Calu3 (cell line): ENCODE measurements at regions of chr6 and their contacts with region 1.

Region 1: DNA sequence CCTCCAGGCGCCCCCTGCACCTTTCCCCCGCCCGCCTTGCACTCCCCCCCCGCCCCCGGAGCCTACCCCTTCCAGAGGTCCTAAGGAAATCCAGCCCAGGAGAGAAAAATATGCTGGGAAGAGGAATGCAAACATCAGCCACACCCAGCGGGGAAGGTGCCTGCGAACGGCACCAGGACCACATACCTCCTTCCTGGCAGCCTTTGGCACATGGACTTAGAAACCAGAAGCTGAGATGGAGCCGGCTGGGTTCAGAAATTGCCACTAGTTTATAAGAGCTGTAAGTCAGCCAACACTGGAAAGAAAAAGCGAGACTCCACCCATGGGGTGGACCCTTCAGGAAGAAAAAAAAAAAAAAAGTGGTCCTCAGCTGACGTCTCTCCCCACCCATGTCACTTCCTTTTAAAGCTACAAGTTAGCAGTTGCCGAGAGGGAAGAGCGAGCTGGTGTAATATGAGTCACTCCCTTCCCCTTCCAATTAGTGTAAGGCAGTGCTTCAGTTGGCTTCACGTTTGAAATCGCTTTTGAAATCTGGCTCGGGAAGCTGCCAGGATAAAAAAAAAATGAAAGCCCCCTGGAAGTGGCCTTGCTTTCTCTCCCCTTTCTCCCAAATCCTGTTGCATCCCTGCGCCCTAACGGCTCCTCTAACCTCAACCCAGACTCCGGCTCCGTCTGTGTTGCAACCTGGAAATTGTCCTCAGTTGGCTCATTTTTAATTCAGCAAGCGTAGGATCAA is at the start of gene AGPAT4:
- DNase-seq: peak; percentile 75
- H3K4me3 Mint-ChIP-seq: peak within 1 kb of the TSS; percentile 75
- H3K27ac Mint-ChIP-seq: peak within 1 kb of the TSS; percentile 96
- H3K4me1 Mint-ChIP-seq: peaks cover 12% of the 10 kb centered on the region
- H3K27me3 Mint-ChIP-seq: no peaks in the 10 kb centered on the region
- CTCF ChIP-seq: no peak
- total RNA-seq, gene AGPAT4: 8.7 and 11.3 TPM in 2 replicates

Region 2: GRCh38 chr6:160714731-160715316 is 559.1 kb before region 1 on chr6:
- CTCF ChIA-PET with region 1: no interaction called
- intact Hi-C with region 1: no loop called
- DNase-seq: no peak
- H3K4me3 Mint-ChIP-seq: no peak overlapping the region
- H3K27ac Mint-ChIP-seq: no peak overlapping the region
- H3K4me1 Mint-ChIP-seq: no peaks in the 10 kb centered on the region
- H3K27me3 Mint-ChIP-seq: no peaks in the 10 kb centered on the region
- CTCF ChIP-seq: no peak

Region 3: DNA sequence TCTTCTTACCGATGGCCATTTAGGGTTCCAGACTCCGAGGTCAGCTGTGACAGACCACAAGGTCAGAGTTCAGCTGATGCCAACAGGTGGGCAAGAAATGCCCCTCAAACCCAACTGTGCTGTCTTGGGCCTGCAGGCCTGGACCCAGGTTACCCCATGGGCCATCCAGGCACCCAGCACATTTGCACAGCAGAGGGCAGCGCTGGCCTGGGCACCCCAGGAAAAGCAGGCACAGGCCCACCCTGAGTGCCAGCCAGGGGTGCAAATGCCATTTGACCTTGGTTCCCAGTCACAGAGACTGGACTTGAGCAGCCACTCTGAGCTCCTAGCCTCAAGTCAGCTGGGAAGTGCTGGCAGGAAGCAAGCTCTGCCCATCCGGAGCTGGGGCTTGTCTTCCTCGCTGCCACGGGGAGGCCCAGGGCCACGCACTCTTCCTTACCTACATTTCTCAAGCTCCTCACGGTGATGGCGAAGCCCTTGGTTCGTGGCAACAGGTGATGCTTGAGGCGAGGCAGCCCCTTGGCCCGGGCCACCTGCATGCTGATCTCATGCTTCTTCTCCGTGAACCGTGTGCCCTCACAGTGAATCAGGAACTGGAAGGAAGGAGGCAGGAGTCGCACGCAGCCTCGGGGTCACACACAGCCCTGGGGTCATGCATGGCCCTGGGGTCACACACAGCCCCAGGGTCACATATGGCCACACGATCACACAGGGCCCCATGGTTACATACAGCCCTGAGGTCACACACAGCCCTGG is 120.8 kb before region 1 on chr6:
- CTCF ChIA-PET with region 1: no interaction called
- intact Hi-C with region 1: loop called (anchors 10 kb)
- DNase-seq: peak; percentile 33
- H3K4me3 Mint-ChIP-seq: no peak overlapping the region
- H3K27ac Mint-ChIP-seq: no peak overlapping the region
- H3K4me1 Mint-ChIP-seq: no peaks in the 10 kb centered on the region
- H3K27me3 Mint-ChIP-seq: no peaks in the 10 kb centered on the region
- CTCF ChIP-seq: peak; percentile 49

Region 4: DNA sequence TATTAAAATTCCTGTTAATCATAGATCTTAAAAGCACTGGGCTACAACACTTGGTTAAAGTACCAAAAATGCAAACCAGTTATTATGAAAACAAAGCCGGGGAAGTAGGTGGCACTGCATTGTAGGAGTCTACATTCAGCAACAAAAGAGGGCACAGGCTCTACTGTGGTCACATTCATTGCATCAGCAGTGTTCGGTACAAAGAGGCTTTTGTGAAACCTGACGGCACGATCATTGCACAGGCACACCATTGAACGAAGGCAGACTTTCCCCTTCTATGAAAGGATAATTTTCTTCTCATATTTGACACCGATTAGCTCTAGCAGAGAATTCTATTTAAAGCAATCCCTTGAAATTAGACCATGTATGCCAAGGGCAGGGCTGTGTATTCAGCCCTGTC is 44.5 kb after region 1 on chr6:
- CTCF ChIA-PET with region 1: interaction called, 6 read pairs
- intact Hi-C with region 1: loop called (anchors 5 kb)
- DNase-seq: peak; percentile 54
- H3K4me3 Mint-ChIP-seq: no peak overlapping the region
- H3K27ac Mint-ChIP-seq: peak overlapping the region; percentile 74
- H3K4me1 Mint-ChIP-seq: peaks cover 29% of the 10 kb centered on the region
- H3K27me3 Mint-ChIP-seq: no peaks in the 10 kb centered on the region
- CTCF ChIP-seq: no peak

Region 5: DNA sequence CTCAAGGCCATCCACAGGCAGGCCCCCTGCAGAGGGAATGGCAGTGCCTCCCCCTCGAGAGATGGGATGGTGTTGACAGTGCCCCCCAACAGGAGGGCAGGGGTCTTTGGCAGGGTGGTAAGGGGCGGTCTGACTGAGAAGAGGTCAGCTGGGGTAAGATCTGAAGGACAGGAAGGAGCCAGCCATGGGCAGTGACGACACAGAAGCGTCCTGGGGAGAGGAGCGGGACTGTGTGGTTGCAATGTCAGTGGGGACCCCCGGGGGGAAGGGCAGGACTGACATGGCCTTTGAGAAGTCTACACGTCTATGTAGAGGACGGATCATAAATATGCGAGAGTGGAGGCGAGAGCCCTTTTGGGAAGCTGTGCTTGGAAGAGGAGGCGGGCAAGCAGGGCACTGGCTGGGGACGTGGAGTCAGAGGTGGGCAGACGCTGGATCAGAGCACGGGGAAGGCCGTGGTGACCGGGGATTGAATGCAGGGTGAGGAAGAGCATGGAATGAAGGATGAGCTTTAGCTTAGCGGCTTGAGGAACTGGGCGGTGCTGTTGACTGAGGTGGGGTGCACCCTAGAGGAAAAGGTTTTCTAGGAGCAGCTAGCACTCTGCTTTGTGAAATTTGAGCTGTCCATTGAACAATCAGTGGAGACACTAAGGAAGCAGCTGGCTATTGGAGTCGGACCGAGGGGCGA is 82.4 kb after region 1 on chr6:
- CTCF ChIA-PET with region 1: no interaction called
- intact Hi-C with region 1: loop called (anchors 5 kb)
- DNase-seq: no peak
- H3K4me3 Mint-ChIP-seq: no peak overlapping the region
- H3K27ac Mint-ChIP-seq: no peak overlapping the region
- H3K4me1 Mint-ChIP-seq: peaks cover 15% of the 10 kb centered on the region
- H3K27me3 Mint-ChIP-seq: no peaks in the 10 kb centered on the region
- CTCF ChIP-seq: no peak